ENCODE measurements at regions of chr11 and their contacts with region 1.

Region 1: GRCh38 chr11:128630367-128631230 is 43.2 kb upstream of the ETS1 start:
- DNase-seq: peak; percentile 89
- H3K4me3 ChIP-seq: no peak overlapping the region
- H3K27ac ChIP-seq: peak overlapping the region; percentile 22
- H3K4me1 ChIP-seq: peaks cover 8% of the 10 kb centered on the region
- H3K27me3 ChIP-seq: no peaks in the 10 kb centered on the region
- CTCF ChIP-seq: peak; percentile 71 to 84
- POLR2A ChIP-seq: no peak

Region 2: DNA sequence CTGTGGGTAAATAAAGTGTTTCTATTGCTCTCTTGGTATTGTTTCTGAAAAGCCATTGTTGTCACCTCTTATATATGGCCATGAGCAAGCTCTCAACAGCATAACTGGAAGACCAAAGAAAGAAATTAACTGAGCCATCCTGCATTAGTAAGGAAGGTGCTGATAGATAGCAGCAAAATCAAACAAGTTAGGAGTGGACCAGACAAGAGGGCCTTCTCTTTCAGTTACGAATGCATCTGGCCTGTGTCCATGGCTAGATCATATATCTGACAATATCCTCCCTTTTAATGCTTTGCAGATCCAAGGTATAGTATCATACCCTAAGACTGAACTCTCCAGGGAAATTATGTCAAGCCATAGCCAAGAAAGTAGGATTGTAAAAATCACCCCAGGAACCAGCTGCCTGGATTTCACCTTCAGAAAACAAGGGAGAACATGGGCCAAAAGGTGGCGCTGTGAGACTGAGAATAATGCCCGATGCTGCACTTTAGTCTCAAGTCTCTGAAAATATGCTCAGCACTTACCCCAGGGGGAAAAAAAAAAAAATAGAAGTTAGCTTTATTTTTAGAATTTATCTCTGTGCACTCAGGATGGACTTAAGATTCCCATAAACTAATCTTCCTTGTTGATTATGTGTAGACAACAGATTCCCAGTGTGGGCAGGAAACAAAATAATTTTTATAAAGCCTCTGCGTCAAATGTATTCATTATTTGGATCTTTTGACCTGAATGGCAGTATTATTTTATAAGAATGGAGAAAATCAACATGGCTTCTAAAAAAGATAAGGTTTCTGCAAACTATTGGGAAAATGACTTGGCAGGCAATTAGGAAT is 458.3 kb before region 1 on chr11:
- CTCF ChIA-PET with region 1: interaction called, 125 read pairs
- POLR2A ChIA-PET with region 1: interaction called, 7 read pairs
- dilution Hi-C with region 1: loop called (anchors 25 kb)
- intact Hi-C with region 1: loop called (anchors 1 kb)
- DNase-seq: peak; percentile 91
- H3K4me3 ChIP-seq: no peak overlapping the region
- H3K27ac ChIP-seq: peak overlapping the region; percentile 42
- H3K4me1 ChIP-seq: peaks cover 9% of the 10 kb centered on the region
- H3K27me3 ChIP-seq: no peaks in the 10 kb centered on the region
- CTCF ChIP-seq: peak; percentile 64 to 74
- POLR2A ChIP-seq: no peak

Region 3: GRCh38 chr11:128290106-128290840 is 340.3 kb before region 1 on chr11:
- CTCF ChIA-PET with region 1: interaction called, 145 read pairs
- POLR2A ChIA-PET with region 1: interaction called, 4 read pairs
- dilution Hi-C with region 1: no loop called
- intact Hi-C with region 1: loop called (anchors 1 kb)
- DNase-seq: peak; percentile 77
- H3K4me3 ChIP-seq: no peak overlapping the region
- H3K27ac ChIP-seq: no peak overlapping the region
- H3K4me1 ChIP-seq: no peaks in the 10 kb centered on the region
- H3K27me3 ChIP-seq: no peaks in the 10 kb centered on the region
- CTCF ChIP-seq: peak; percentile 71 to 72
- POLR2A ChIP-seq: no peak

Region 4: DNA sequence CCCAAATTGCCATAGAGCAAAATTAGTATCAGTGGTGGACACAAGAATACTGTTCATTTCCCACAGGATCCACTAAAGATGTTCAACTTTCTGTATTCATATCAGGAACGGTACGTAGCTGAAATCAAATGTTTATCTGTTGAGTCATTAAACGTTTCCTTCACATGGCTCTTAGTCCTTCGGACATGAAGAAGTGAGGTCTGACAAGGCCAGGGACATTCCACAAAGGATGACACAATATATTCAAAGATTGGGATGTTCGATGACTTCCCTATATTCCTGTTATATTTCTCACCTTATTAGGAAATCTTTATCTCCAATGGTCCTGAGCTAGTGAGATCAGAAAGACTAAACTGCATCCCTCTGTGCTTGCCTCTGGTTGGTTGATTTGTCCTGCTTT is 172.3 kb before region 1 on chr11:
- CTCF ChIA-PET with region 1: interaction called, 11 read pairs
- POLR2A ChIA-PET with region 1: no interaction called
- dilution Hi-C with region 1: no loop called
- intact Hi-C with region 1: loop called (anchors 5 kb)
- DNase-seq: peak; percentile 62
- H3K4me3 ChIP-seq: no peak overlapping the region
- H3K27ac ChIP-seq: peak overlapping the region; percentile 61
- H3K4me1 ChIP-seq: peaks cover 11% of the 10 kb centered on the region
- H3K27me3 ChIP-seq: no peaks in the 10 kb centered on the region
- CTCF ChIP-seq: no peak
- POLR2A ChIP-seq: no peak

Region 5: DNA sequence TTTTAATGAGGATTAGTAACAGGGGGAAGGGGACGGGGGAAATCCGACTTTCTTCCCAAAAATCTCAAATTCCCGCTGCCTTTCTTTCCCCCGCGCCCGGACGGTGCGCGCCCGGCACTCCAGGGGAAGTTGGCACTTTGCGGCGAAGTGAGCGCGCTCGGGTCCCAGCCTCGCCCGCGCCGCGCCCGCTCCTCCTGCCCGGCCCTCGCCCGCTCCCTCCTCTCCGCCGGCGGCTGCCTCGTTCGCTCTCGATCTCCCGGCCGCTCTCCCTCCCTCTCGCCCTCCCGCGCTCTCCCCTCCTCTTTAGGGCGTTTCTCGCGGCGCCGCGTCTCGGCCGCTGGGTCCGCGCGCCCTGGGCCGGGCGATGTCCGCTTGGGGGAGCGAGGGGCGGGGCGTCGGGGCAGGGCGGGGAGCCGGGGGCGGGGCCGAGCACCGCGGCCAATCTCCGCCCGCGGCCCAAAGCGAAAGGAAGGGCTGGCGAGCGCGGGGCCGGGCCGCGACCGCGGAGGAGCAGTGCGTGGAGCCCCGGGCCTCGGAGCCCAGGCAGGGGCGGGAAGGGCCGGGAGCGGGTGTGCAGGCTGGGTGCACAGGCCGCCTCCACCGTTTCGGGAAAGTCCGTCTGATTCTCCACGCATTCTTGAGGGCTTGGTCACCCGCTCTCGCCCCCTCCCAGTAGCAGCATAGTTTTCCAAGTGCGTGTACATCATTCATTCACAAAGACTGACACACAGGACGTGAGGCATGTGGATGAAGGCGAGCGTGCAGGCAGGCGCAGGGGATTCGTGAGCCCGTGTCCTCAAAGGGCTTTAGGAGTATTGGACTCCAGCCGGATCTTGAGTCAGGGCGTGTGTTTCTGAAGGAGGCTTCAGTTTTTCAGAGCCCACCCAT is 108.3 kb before region 1 on chr11:
- CTCF ChIA-PET with region 1: interaction called, 15 read pairs
- POLR2A ChIA-PET with region 1: interaction called, 5 read pairs
- dilution Hi-C with region 1: no loop called
- intact Hi-C with region 1: loop called (anchors 1 kb)
- DNase-seq: peak; percentile 97
- H3K4me3 ChIP-seq: peak overlapping the region; percentile 68 to 98 (median 97)
- H3K27ac ChIP-seq: peak overlapping the region; percentile 99
- H3K4me1 ChIP-seq: peaks cover 52% of the 10 kb centered on the region
- H3K27me3 ChIP-seq: no peaks in the 10 kb centered on the region
- CTCF ChIP-seq: no peak
- POLR2A ChIP-seq: peak; percentile 69

Region 6: DNA sequence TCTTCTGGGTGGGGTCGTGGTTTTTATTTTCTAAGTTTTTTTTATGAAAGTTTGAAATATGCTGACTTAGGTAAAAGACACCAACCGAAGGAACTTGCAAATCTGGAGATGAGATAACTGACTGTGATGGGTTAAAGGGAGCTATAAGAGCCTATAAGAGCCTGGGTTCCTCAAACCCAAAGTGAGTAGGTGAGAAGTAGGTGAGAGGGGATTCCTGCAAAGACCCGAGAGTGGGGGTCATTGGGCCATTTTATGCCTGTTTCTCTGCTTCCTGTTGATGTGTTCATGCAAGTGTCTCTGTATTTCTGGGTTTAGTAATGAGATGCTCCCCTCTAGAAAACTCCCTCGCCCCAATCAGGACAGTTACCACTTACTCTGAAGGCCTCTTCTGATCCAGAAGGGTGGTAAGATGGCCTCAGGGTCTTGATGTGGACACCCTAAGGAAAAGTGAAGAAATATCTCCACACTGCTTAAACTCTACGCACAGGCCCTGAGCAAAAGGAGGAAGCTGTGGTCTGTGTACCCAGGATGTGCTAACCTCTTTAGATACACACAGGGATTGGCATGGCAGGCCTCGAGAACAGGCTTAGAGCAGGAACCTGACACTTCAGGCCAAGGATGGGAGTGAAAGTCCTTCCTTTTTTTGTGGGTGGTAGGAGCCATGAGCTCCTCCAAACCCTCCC is 65.1 kb after region 1 on chr11:
- CTCF ChIA-PET with region 1: interaction called, 15 read pairs
- POLR2A ChIA-PET with region 1: interaction called, 3 read pairs
- dilution Hi-C with region 1: no loop called
- intact Hi-C with region 1: loop called (anchors 1 kb)
- DNase-seq: no peak
- H3K4me3 ChIP-seq: peak overlapping the region; percentile 56 to 94 (median 92)
- H3K27ac ChIP-seq: peak overlapping the region; percentile 98
- H3K4me1 ChIP-seq: peaks cover 66% of the 10 kb centered on the region
- H3K27me3 ChIP-seq: no peaks in the 10 kb centered on the region
- CTCF ChIP-seq: no peak
- POLR2A ChIP-seq: peak; percentile 35

Region 7: GRCh38 chr11:128831174-128832120 is 200.8 kb after region 1 on chr11:
- CTCF ChIA-PET with region 1: interaction called, 20 read pairs
- POLR2A ChIA-PET with region 1: no interaction called
- dilution Hi-C with region 1: no loop called
- intact Hi-C with region 1: loop called (anchors 1 kb)
- DNase-seq: peak; percentile 87
- H3K4me3 ChIP-seq: no peak overlapping the region
- H3K27ac ChIP-seq: peak overlapping the region; percentile 47
- H3K4me1 ChIP-seq: peaks cover 65% of the 10 kb centered on the region
- H3K27me3 ChIP-seq: no peaks in the 10 kb centered on the region
- CTCF ChIP-seq: peak; percentile 81 to 84
- POLR2A ChIP-seq: no peak

Measured in endothelial cell of umbilical vein (primary cell).